ENCODE measurements at regions of chr14 and their contacts with region 1.

Region 1: GRCh38 chr14:91649930-91650329 is 82.0 kb downstream of the CATSPERB start:
- DNase-seq: peak in 1 of 2 experiments; percentile 0
- H3K4me3 ChIP-seq: no peak overlapping the region
- H3K27ac ChIP-seq: no peak overlapping the region
- H3K4me1 ChIP-seq: peaks cover 9% of the 10 kb centered on the region
- H3K27me3 ChIP-seq: no peaks in the 10 kb centered on the region
- CTCF ChIP-seq: peak; percentile 68

Region 2: GRCh38 chr14:91575469-91576208 is 74.3 kb before region 1 on chr14:
- CTCF ChIA-PET with region 1: no interaction called
- POLR2A ChIA-PET with region 1: no interaction called
- intact Hi-C with region 1: no loop called
- DNase-seq: no peak
- H3K4me3 ChIP-seq: no peak overlapping the region
- H3K27ac ChIP-seq: no peak overlapping the region
- H3K4me1 ChIP-seq: no peaks in the 10 kb centered on the region
- H3K27me3 ChIP-seq: no peaks in the 10 kb centered on the region
- CTCF ChIP-seq: no peak

Region 3: DNA sequence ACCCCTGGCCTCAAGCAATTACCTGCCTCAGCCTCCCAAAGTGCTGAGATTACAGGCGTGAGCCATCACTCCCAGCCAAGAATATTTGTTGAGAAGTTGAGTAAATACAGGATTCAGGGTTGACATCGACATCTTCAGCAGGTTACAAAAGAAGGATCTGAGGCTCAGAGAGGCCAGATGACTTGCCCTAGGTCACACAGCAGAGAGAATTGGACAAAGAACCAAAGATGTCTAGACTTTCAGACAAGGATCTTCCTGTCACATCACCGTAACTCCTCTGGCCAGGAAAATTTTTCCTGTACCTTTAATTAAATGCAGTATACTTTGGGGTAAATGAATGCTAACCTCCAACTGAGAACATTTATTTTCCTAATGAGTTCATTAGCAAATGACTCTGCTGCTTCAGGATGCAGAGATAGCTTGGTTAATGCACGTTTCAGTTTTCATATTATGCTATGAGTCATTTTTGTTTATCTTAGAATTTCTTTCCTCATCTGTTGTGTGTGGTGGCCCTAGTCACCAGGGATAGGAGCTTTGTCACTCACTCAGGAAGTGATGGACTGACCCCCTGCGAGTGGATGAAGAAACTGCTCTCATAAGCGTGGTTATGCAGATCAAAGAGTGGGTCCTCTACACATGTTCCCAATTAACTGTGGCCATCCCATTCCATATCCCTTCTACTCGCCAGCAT is 208.4 kb after region 1 on chr14:
- CTCF ChIA-PET with region 1: no interaction called
- POLR2A ChIA-PET with region 1: no interaction called
- intact Hi-C with region 1: loop called (anchors 5 kb)
- DNase-seq: peak; percentile 6 to 71
- H3K4me3 ChIP-seq: no peak overlapping the region
- H3K27ac ChIP-seq: no peak overlapping the region
- H3K4me1 ChIP-seq: no peaks in the 10 kb centered on the region; the same call in 1 of the 2 replicates
- H3K27me3 ChIP-seq: no peaks in the 10 kb centered on the region
- CTCF ChIP-seq: peak; percentile 36; the same call in 1 of the 2 replicates

Region 4: GRCh38 chr14:91911474-91912032 is 261.6 kb after region 1 on chr14:
- CTCF ChIA-PET with region 1: interaction called, 3 read pairs
- POLR2A ChIA-PET with region 1: no interaction called
- intact Hi-C with region 1: loop called (anchors 5 kb)
- DNase-seq: no peak
- H3K4me3 ChIP-seq: no peak overlapping the region
- H3K27ac ChIP-seq: no peak overlapping the region
- H3K4me1 ChIP-seq: no peaks in the 10 kb centered on the region
- H3K27me3 ChIP-seq: no peaks in the 10 kb centered on the region
- CTCF ChIP-seq: peak; percentile 68

Measured in PC-9 (cell line).